ENCODE measurements at regions of chr11 and their contacts with region 1.

Region 1: DNA sequence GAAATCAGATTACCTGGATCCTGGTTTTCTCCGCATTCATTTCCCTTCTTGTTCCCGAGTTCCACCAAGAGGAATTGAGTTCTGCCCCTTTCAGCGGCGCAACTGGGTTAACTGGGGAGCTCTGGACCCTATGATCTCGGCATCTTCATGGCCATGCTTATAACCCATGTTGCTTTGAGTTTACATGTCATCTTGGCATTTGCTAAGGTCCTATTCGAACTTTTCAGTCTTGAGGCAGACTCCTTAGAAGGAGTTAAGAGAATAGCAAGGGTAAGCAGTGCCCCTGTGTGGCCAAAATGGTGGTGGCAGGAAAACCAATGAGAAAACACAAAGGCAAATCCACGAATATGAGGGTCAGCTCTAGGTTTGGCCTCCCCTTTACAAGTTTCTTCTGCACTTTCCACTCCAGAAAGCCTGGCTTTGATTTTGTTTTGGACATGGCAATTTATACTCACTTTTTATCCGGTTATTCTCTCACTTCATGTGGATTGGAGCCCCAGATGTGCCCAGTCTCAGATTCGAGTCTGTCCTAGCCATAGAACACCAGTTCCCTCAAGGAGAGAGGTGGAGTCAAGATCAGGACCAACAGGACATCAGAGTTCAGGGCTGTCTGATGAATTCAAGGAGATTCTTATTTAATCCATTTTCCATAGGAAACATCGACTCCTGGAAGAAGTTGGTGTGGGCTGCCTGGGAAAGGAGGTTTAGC is 55.3 kb upstream of the FBXO3 start:
- DNase-seq: peak; percentile 20 to 61 (median 54)
- ATAC-seq: peak; percentile 89
- H3K4me3 ChIP-seq: no peak overlapping the region
- H3K4me3 Mint-ChIP-seq: peak overlapping the region; percentile 74 to 92 (median 82)
- H3K27ac ChIP-seq: no peak overlapping the region
- H3K27ac Mint-ChIP-seq: no peak overlapping the region
- H3K4me1 ChIP-seq: peaks cover 4% of the 10 kb centered on the region in 2 donors
- H3K4me1 Mint-ChIP-seq: peaks cover 2 to 7% (median 6%) of the 10 kb centered on the region in 7 donors
- H3K27me3 ChIP-seq: peaks cover 0 to 10% of the 10 kb centered on the region in 2 donors
- H3K27me3 Mint-ChIP-seq: peaks cover 45 to 68% (median 66%) of the 10 kb centered on the region in 5 donors

Region 2: DNA sequence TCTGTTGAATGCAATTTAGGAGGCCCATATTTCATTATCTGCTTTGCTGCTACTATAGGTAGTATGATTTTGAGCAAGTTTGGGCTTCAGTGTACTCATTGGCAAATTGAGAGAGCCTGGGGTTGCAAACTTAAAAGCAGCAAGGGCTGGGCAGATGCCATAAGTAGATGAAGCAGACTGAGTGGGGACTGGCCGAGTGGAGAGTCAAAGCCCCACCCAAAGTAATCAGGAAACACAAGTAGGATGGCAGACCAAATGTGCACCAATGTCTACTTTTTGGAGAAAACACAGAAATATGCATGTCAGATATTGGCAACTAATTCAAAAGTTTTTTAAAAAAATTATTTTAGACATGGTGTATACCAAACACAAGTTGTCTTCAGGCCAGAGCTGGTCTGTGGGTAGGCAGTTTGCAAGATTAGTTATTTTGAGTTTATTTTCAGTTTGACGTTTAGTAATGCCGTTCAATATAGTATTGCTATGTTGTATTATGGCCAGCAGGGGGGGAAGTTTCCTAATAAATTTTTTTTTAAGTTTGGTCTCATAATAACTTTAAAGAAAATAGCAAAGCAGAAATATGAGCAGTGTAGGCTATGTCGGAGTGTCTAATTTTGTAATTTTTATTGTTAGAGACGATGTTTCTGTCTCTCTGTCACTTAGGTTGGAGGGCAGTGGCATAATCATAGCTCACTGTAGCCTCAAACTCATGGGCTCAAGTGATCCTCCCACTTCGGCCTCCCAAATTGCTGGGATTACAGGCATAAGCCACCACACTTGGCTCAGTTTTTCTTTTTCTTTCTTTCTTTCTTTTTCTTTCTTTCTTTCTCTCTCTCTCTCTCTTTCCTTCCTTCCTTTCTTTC is 467.3 kb before region 1 on chr11:
- CTCF ChIA-PET with region 1: no interaction called
- POLR2A ChIA-PET with region 1: no interaction called
- intact Hi-C with region 1: loop called in 1 of 2 experiments (anchors 1 kb)
- DNase-seq: peak in 7 of 9 donors; percentile 20 to 45 (median 35)
- ATAC-seq: peak; percentile 69
- H3K4me3 ChIP-seq: no peak overlapping the region
- H3K4me3 Mint-ChIP-seq: peak overlapping the region in 1 of 10 donors; percentile 53
- H3K27ac ChIP-seq: no peak overlapping the region
- H3K27ac Mint-ChIP-seq: no peak overlapping the region
- H3K4me1 ChIP-seq: no peaks in the 10 kb centered on the region
- H3K4me1 Mint-ChIP-seq: peaks cover 0 to 6% (median 2%) of the 10 kb centered on the region in 7 donors
- H3K27me3 ChIP-seq: no peaks in the 10 kb centered on the region
- H3K27me3 Mint-ChIP-seq: peaks cover 5 to 29% (median 14%) of the 10 kb centered on the region in 5 donors

Region 3: DNA sequence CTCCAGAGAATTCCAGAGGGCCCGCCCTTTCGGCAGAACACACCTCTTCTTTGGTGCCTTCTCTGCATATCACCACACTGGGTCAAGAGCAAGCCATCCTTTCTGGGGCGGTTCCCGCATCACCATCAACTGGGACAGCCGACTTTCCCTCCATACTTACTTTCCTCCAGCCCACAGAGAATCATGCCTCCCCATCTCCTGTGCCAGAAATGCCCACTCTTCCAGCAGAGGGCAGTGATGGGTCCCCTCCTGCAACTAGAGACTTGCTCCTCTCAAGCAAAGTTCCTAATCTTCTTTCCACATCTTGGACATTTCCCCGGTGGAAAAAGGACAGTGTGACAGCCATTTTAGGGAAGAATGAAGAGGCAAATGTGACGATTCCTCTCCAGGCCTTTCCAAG is 286.7 kb before region 1 on chr11:
- CTCF ChIA-PET with region 1: no interaction called
- POLR2A ChIA-PET with region 1: interaction called, 3 read pairs
- intact Hi-C with region 1: loop called in 1 of 2 experiments (anchors 1 kb)
- DNase-seq: peak in 6 of 9 donors; percentile 11 to 31 (median 16)
- ATAC-seq: no peak
- H3K4me3 ChIP-seq: no peak overlapping the region
- H3K4me3 Mint-ChIP-seq: no peak overlapping the region
- H3K27ac ChIP-seq: no peak overlapping the region
- H3K27ac Mint-ChIP-seq: no peak overlapping the region
- H3K4me1 ChIP-seq: no peaks in the 10 kb centered on the region
- H3K4me1 Mint-ChIP-seq: peaks cover 0 to 3% (median 0%) of the 10 kb centered on the region in 7 donors
- H3K27me3 ChIP-seq: no peaks in the 10 kb centered on the region
- H3K27me3 Mint-ChIP-seq: peaks cover 21 to 33% (median 25%) of the 10 kb centered on the region in 5 donors

Region 4: DNA sequence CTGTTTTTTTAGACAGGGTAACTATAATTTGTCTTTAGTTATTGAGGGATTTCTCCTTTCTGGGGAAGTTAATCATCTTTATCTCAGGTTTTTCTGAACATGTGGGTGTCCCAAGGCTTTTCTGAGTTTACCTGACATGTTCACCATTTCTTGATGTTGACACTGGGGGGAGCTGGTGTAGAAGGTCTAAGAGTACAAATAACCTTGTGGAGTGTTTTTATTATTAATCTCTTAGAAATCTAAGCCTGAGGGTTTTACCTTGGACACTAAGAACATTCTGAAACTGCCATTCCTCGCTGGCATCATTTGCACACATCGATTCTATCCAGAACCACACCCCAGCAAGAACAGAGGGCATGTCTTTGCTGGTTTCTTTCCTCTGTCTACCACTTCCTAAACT is 113.4 kb before region 1 on chr11:
- CTCF ChIA-PET with region 1: interaction called, 8 read pairs
- POLR2A ChIA-PET with region 1: no interaction called
- intact Hi-C with region 1: loop called (anchors 1 kb)
- DNase-seq: peak in 2 of 9 donors; percentile 10 to 23
- ATAC-seq: no peak
- H3K4me3 ChIP-seq: no peak overlapping the region
- H3K4me3 Mint-ChIP-seq: no peak overlapping the region
- H3K27ac ChIP-seq: no peak overlapping the region
- H3K27ac Mint-ChIP-seq: no peak overlapping the region
- H3K4me1 ChIP-seq: no peaks in the 10 kb centered on the region
- H3K4me1 Mint-ChIP-seq: peaks cover 0 to 7% (median 0%) of the 10 kb centered on the region in 7 donors
- H3K27me3 ChIP-seq: no peaks in the 10 kb centered on the region
- H3K27me3 Mint-ChIP-seq: no peaks in the 10 kb centered on the region

Region 5: DNA sequence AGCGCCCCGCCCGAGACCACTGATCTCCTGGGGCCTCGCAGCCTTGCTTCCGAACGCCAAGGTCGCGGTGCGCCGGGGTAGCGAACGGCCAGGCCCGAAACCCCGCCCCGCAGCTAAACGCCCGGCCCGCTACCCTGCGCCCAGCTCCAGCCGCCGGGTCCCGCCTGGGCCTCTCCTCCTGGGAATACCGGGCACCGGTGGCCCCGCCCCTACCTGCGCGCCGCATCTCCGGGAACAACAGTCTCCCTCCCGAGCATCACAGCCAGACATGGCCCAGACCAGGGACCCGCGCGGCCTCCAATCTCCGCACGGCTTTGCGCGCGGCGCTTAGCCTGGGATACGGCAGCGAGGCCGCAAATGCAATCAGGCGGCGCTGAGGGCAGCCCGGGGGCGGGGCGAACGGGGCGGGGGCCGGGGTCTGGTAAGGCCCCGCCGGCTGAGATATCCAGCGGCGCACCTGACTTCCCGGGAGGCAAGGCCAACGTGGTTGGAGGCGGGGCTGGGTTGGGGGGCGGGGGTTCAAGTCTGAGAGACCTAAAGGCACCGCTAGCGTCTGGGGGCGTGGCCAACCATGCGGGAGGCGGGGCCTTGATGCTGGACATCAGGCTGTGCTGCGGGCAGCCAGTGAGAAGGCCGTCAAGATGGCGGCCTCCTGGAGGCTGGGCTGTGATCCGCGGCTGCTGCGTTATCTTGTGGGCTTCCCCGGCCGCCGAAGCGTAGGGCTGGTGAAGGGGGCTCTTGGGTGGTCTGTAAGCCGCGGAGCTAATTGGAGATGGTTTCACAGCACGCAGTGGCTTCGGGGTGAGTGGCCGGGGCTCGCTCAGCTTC is 1086.6 kb after region 1 on chr11 and contains the starts of genes APIP and PDHX:
- CTCF ChIA-PET with region 1: no interaction called
- POLR2A ChIA-PET with region 1: no interaction called
- intact Hi-C with region 1: no loop called
- DNase-seq: peak; percentile 77 to 97 (median 83)
- ATAC-seq: peak; percentile 94
- H3K4me3 ChIP-seq: peak within 1 kb of the TSS; percentile 87
- H3K4me3 Mint-ChIP-seq: peak within 1 kb of the TSS; percentile 90 to 99 (median 96)
- H3K27ac ChIP-seq: peak within 1 kb of the TSS; percentile 92
- H3K27ac Mint-ChIP-seq: peak within 1 kb of the TSS; percentile 86 to 98 (median 95)
- H3K4me1 ChIP-seq: peaks cover 9 to 18% of the 10 kb centered on the region in 2 donors
- H3K4me1 Mint-ChIP-seq: peaks cover 36 to 71% (median 57%) of the 10 kb centered on the region in 7 donors
- H3K27me3 ChIP-seq: no peaks in the 10 kb centered on the region
- H3K27me3 Mint-ChIP-seq: no peaks in the 10 kb centered on the region
- total RNA-seq, gene APIP: 8.2 to 23.6 (median 17.7) TPM
- total RNA-seq, gene PDHX: 20.0 to 54.1 (median 28.8) TPM